Activated CD4-positive, alpha-beta T cell treated with anti-CD3 and anti-CD28 coated beads for 36 hours (primary cell): ENCODE measurements at regions of chr6 and their contacts with region 1.

Region 1: GRCh38 chr6:32127717-32128592 is at the start of gene ATF6B:
- DNase-seq: peak; percentile 99
- ATAC-seq: peak; percentile 91
- H3K4me3 Mint-ChIP-seq: peak within 1 kb of the TSS; percentile 99
- H3K27ac Mint-ChIP-seq: peak within 1 kb of the TSS; percentile 98
- H3K4me1 Mint-ChIP-seq: peaks cover 39% of the 10 kb centered on the region
- H3K27me3 Mint-ChIP-seq: no peaks in the 10 kb centered on the region
- total RNA-seq, gene ATF6B: 60.2 to 63.4 TPM

Region 2: DNA sequence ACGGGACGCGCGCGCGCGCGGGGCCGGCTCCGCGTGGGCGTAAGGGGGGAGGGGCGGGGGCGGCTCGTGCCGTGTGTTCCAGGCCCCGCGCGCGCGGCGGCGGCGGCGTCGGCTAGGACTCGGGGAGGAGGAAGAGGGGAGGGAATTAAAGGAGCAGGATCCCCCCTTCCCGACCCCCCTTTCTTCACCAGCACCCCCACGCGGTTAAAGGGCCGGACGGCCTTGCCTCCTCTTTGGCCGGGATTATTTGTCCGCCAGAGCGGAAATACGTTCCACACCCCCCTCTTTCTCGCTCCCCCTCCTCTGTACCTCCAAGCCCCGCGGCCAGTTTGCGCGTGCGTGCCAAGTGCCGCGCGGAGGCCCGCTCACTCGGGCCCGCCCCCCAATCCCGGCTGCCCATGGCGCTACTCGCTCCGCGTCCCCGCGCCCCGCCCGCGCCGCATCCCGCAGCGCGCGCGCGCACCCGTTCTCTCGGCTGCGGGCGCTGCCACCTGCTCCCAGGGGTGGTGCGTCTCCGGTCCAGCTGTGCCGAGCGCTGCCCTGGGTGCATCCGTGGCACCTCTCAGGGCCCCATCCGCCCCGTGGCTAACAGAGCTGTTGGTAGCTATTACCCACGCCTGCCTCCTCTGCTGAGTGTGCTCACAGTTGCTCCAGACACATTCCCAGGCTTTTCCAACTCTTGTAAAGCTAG is 225.9 kb before region 1 on chr6 and contains the start of gene ZBTB12:
- CTCF ChIA-PET with region 1: no interaction called
- POLR2A ChIA-PET with region 1: interaction called, 3 read pairs
- intact Hi-C with region 1: loop called in 1 of 2 experiments (anchors 1 kb)
- DNase-seq: peak; percentile 92
- ATAC-seq: peak; percentile 63
- H3K4me3 Mint-ChIP-seq: peak within 1 kb of the TSS; percentile 69
- H3K27ac Mint-ChIP-seq: peak within 1 kb of the TSS; percentile 78
- H3K4me1 Mint-ChIP-seq: peaks cover 25% of the 10 kb centered on the region
- H3K27me3 Mint-ChIP-seq: no peaks in the 10 kb centered on the region
- total RNA-seq, gene ZBTB12: 1.9 to 2.4 TPM

Region 3: DNA sequence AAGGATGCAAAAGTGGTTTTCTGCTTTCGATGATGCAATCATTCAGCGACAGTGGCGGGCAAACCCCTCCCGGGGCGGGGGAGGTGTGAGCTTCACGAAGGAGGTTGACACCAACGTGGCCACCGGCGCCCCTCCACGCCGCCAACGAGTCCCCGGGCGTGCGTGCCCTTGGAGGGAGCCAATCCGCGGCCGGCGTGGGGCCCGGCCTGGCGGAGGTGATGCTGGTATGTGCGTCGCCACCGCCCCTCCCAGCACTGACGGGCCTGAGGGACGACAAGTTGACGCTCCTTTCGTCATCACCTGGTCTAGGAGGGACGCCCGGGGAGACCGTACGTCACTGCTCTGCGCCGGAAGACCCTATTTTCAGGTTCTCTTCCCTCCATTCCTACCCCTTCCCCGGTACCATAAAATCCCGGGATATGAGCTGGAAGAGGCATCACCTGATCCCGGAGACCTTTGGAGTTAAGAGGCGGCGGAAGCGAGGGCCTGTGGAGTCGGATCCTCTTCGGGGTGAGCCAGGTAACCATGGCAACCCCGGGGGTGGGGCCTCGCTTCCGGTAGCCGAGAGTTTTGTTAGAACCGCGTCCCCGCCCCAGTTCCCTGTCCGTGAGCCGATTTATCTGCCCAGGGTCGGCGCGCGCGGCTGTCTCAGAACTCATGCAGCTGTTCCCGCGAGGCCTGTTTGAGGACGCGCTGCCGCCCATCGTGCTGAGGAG is 155.8 kb before region 1 on chr6 and contains the start of gene DXO:
- CTCF ChIA-PET with region 1: no interaction called
- POLR2A ChIA-PET with region 1: no interaction called
- intact Hi-C with region 1: loop called in 1 of 2 experiments (anchors 1 kb)
- DNase-seq: peak; percentile 99
- ATAC-seq: peak; percentile 96
- H3K4me3 Mint-ChIP-seq: peak within 1 kb of the TSS; percentile 96
- H3K27ac Mint-ChIP-seq: peak within 1 kb of the TSS; percentile 99
- H3K4me1 Mint-ChIP-seq: peaks cover 43% of the 10 kb centered on the region
- H3K27me3 Mint-ChIP-seq: no peaks in the 10 kb centered on the region
- total RNA-seq, gene DXO: 12.6 to 13.9 TPM

Region 4: DNA sequence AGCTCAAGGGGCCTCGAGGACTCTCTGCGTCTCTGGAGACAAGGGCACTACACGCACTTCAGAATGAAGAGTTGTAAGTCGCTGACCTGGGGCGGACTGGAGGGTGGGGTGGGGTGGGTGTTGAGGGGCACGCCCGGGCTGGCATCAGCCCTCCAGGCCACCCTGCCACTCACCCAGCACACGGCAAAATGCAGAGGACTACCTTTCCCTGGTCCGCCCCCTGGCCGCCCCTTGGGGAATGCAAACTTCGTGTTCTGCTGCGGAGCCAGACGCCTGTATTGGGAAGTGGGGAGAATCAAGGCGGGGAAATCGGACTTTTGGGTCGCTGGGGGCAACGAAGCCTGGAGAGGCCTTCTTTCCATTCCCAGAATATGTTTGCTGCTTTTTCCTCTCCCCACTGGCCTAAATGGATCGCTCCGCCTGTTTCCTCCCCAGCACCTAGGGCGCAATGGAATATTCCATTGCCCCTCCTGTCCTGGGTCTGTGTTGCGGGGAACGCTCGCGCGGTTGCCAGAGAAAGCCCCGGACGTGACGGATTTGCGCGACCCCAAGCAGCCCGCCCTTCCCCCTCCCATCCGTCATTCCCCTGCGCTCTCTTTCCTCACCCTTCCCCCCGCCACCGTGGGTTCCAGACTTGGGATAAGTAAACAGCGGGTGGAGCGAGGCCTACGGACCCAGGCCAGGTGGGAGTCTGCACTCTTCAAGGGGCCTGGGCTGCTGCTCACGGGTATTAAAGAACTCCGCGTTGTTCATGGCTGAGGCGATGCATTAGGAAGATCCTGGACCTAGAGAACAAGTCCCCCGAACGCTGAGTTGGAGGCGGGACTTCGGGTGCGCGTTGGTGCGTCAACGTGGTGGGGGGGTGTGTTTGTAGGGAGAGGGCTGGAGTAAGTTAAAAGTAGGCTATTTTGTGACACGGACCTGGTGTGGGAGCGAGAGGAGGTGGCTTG is 25.9 kb after region 1 on chr6 and contains the start of gene PPT2:
- CTCF ChIA-PET with region 1: interaction called, 6 read pairs
- POLR2A ChIA-PET with region 1: interaction called, 3 read pairs
- intact Hi-C with region 1: loop called (anchors 1 kb)
- DNase-seq: peak; percentile 88
- ATAC-seq: peak; percentile 76
- H3K4me3 Mint-ChIP-seq: peak within 1 kb of the TSS; percentile 91
- H3K27ac Mint-ChIP-seq: peak within 1 kb of the TSS; percentile 92
- H3K4me1 Mint-ChIP-seq: peaks cover 45% of the 10 kb centered on the region
- H3K27me3 Mint-ChIP-seq: peaks cover 11% of the 10 kb centered on the region
- total RNA-seq, gene PPT2: 9.9 to 10.1 TPM

Region 5: GRCh38 chr6:32838114-32838958 is 710.4 kb after region 1 on chr6 and contains the start of gene TAP2:
- CTCF ChIA-PET with region 1: no interaction called
- POLR2A ChIA-PET with region 1: no interaction called
- intact Hi-C with region 1: loop called in 1 of 2 experiments (anchors 5 kb)
- DNase-seq: peak; percentile 99
- ATAC-seq: peak; percentile 82
- H3K4me3 Mint-ChIP-seq: peak within 1 kb of the TSS; percentile 95
- H3K27ac Mint-ChIP-seq: peak within 1 kb of the TSS; percentile 94
- H3K4me1 Mint-ChIP-seq: peaks cover 79% of the 10 kb centered on the region
- H3K27me3 Mint-ChIP-seq: no peaks in the 10 kb centered on the region
- total RNA-seq, gene TAP2: 96.4 to 150 TPM

Region 6: DNA sequence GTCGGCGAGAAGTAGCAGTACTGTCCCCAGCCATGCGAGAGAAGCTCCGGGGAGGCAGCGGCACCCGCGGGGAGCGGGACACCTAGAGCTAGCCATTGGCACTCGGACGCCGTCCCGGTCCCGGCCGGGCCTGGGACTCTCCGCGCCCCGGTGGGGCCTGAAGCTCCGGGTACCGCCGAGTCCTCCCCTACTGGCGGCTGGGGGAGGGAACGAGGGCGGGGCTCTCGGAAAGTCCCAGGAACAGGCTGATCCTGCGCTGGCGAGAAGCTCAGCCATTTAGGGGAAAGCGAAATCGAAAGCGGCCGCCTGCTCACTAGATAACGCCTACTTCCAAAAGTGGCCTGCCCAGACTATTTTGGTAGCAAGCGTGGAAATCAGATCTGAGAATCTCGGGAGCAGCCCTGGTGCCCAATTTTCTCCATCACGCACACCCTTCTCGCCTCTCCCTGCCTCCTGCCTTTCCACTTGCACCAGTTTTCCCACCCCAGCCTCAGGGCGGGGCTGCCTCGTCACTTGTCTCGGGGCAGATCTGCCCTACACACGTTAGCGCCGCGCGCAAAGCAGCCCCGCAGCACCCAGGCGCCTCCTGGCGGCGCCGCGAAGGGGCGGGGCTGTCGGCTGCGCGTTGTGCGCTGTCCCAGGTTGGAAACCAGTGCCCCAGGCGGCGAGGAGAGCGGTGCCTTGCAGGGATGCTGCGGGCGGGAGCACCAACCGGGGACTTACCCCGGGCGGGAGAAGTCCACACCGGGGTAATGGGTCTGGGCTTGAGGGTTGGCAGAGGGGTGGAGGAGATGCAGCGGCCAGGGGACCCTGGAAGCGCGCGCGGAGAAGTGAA is 725.8 kb after region 1 on chr6 and contains the starts of genes PSMB9 and TAP1:
- CTCF ChIA-PET with region 1: no interaction called
- POLR2A ChIA-PET with region 1: no interaction called
- intact Hi-C with region 1: loop called in 1 of 2 experiments (anchors 1 kb)
- DNase-seq: peak; percentile 98
- ATAC-seq: peak; percentile 84
- H3K4me3 Mint-ChIP-seq: peak within 1 kb of the TSS; percentile 100
- H3K27ac Mint-ChIP-seq: peak within 1 kb of the TSS; percentile 99
- H3K4me1 Mint-ChIP-seq: peaks cover 62% of the 10 kb centered on the region
- H3K27me3 Mint-ChIP-seq: no peaks in the 10 kb centered on the region
- total RNA-seq, gene PSMB9: 210 to 282 TPM
- total RNA-seq, gene TAP1: 191 to 255 TPM